GM10248 (cell line): ENCODE measurements at regions of chr4 and their contacts with region 1.

Region 1: GRCh38 chr4:88308587-88308986 is 24.2 kb upstream of the PPM1K start:
- DNase-seq: no peak
- CTCF ChIP-seq: no peak

Region 2: GRCh38 chr4:88297725-88298454 is 10.7 kb before region 1 on chr4:
- CTCF ChIA-PET with region 1: interaction called, 15 read pairs
- POLR2A ChIA-PET with region 1: no interaction called
- DNase-seq: no peak
- CTCF ChIP-seq: no peak